Activated CD4-positive, alpha-beta memory T cell treated with anti-CD3 and anti-CD28 coated beads, Interleukin-2, amount 10 ng/mL, durations not matched to agents 7 days and 5 days (primary cell): ENCODE measurements at regions of chr20 and their contacts with region 1.

Region 1: GRCh38 chr20:45311589-45312211 is 3.6 kb upstream of the MATN4 start:
- DNase-seq: peak; percentile 69
- H3K4me3 Mint-ChIP-seq: no peak overlapping the region
- H3K27ac Mint-ChIP-seq: no peak overlapping the region
- H3K4me1 Mint-ChIP-seq: peaks cover 13% of the 10 kb centered on the region
- H3K27me3 Mint-ChIP-seq: peaks cover 33% of the 10 kb centered on the region

Region 2: DNA sequence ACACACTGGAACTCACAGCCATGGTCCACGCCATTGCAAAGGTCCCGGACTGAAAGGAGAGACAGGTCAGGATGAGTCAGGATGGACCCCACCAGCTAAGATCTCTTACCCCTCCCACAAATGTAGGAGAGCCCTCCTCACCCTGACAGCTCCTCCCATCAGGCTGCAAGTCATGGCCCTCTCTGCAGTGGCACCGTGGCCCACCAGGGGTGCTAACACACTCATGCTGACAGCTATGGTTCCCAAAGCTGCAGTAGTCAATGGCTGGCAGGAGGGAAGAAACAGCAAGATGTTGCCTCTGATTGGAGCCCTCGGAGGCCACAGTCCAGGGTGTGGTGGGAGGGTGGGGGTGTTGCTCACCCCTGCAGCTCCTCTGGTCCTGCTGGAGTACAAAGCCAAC is 10.7 kb before region 1 on chr20:
- CTCF ChIA-PET with region 1: interaction called, 33 read pairs
- POLR2A ChIA-PET with region 1: no interaction called
- DNase-seq: peak; percentile 49
- H3K4me3 Mint-ChIP-seq: no peak overlapping the region
- H3K27ac Mint-ChIP-seq: no peak overlapping the region
- H3K4me1 Mint-ChIP-seq: peaks cover 44% of the 10 kb centered on the region
- H3K27me3 Mint-ChIP-seq: peaks cover 8% of the 10 kb centered on the region

Region 3: DNA sequence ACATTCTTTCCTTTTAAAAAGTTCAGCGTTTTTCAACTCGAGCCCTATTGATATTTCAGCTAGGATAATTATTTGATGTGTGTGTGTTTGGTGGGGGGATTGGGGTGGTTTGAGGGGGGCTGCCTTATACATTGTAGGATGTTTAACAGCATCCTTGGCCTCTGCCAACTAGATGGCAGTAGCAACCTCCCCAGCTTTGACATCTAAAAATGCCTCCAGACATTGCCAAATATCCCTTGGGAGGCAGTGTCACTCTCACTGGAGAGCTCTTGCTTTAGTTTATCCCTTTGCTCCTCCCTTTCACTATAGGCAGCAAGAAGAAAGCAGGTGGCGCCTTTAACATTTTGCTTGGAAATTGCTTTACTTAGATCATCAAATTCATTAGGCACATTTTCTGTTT is 81.0 kb after region 1 on chr20:
- CTCF ChIA-PET with region 1: no interaction called
- POLR2A ChIA-PET with region 1: no interaction called
- DNase-seq: no peak
- H3K4me3 Mint-ChIP-seq: no peak overlapping the region
- H3K27ac Mint-ChIP-seq: no peak overlapping the region
- H3K4me1 Mint-ChIP-seq: peaks cover 3% of the 10 kb centered on the region
- H3K27me3 Mint-ChIP-seq: no peaks in the 10 kb centered on the region

Region 4: GRCh38 chr20:45890985-45891983 is 579.6 kb after region 1 on chr20 and contains the starts of genes CTSA and NEURL2:
- CTCF ChIA-PET with region 1: no interaction called
- POLR2A ChIA-PET with region 1: no interaction called
- DNase-seq: peak; percentile 87
- H3K4me3 Mint-ChIP-seq: peak within 1 kb of the TSS; percentile 88
- H3K27ac Mint-ChIP-seq: peak within 1 kb of the TSS; percentile 40
- H3K4me1 Mint-ChIP-seq: peaks cover 36% of the 10 kb centered on the region
- H3K27me3 Mint-ChIP-seq: peaks cover 5% of the 10 kb centered on the region
- total RNA-seq, gene CTSA: 64.3 to 64.6 TPM
- total RNA-seq, gene NEURL2: 1.0 to 1.6 TPM